Esophagus muscularis mucosa (tissue), 4 donors: ENCODE measurements at regions of chr2 and their contacts with region 1.

Region 1: DNA sequence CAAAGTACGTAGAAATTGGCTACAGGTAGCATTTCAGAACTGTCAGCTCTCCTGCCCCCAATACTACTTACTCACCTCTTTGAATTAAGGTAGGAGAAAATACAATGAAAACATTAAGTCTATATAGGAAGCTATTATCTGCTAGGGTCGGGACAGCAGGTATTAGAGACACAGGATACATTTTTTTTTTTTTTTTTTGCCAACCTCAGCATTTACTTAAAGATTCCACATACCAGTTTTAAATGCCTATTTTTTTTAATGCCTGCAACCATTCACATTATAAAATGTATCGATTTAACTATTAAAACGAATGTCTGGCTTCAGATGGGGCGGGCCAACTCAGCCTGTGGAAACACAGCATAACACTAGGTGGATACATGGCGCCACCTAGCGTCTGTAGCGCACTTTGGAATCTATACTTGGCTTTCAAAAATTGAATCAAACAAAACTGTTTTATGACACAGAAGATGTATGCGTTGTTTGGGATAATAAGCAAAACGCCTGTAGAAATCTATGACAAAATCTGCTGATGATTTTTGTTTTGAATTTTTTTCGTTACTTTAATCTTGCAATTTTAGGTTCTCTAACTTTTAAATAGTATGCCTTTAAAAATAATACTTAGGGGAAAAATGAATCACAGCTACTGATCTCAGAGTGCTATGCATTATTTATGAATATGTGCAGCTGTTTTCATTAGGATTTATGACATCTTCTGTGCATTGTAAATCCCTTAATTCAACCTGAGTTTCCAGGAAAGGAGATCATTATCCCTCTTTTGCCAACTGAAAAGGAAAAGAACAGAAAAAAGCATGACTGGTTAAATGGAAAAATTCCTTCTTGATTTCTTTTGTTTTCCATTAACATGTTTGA is 261.0 kb downstream of the NYAP2 start:
- DNase-seq: no peak
- H3K4me3 ChIP-seq: no peak overlapping the region
- H3K27ac ChIP-seq: no peak overlapping the region
- H3K4me1 ChIP-seq: no peaks in the 10 kb centered on the region
- H3K27me3 ChIP-seq: no peaks in the 10 kb centered on the region
- CTCF ChIP-seq: peak; percentile 73 to 89 (median 73)
- EP300 ChIP-seq: no peak
- POLR2A ChIP-seq: no peak

Region 2: GRCh38 chr2:225122583-225123486 is 537.7 kb before region 1 on chr2:
- intact Hi-C with region 1: loop called (anchors 5 kb)
- DNase-seq: no peak
- H3K4me3 ChIP-seq: no peak overlapping the region
- H3K27ac ChIP-seq: no peak overlapping the region
- H3K4me1 ChIP-seq: peaks cover 0 to 7% (median 0%) of the 10 kb centered on the region in 4 donors
- H3K27me3 ChIP-seq: no peaks in the 10 kb centered on the region
- CTCF ChIP-seq: peak; percentile 18 to 57 (median 39)
- EP300 ChIP-seq: no peak
- POLR2A ChIP-seq: no peak

Region 3: DNA sequence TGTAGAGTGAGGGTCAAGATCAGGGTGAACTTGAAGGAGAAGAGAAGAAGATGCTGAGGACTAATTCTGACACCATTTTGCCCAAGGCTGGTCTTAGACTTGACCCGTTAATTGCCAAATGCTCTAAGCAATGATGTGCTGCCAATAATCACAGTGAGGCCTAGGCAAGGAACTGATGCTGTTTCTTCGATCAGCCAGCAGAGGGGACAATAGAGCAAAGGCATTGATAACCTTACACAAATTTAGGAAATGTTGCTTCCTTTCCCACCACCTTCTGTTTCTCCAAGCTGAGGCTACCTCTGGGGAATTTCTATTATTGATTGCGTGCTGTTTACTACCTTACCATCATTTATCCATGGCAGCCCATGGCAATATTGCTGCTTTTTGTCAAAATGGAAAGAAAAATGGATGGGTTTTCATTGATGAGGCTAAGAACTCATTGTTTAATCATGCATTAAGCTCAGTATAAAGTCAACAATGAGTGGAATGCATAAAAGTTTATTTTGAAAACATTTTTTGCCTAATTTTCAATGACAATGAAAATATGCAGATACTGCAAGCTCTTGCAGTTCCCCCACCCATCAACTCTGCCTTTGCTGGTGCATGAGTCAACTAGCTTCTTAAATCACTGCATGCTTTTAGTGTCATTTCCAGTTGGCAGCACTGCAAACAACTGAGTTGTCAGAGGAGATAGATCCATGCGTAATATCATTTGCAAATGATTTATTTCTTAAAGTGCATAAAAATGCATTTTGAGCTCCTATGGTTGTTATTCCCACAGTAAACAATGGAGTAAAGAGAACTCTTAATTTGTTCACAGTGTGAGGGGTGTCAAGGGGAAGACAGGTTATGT is 377.4 kb before region 1 on chr2:
- intact Hi-C with region 1: loop called (anchors 2 kb)
- DNase-seq: no peak
- H3K4me3 ChIP-seq: no peak overlapping the region
- H3K27ac ChIP-seq: no peak overlapping the region
- H3K4me1 ChIP-seq: no peaks in the 10 kb centered on the region
- H3K27me3 ChIP-seq: no peaks in the 10 kb centered on the region
- CTCF ChIP-seq: peak in 1 of 3 experiments; percentile 42
- EP300 ChIP-seq: no peak
- POLR2A ChIP-seq: no peak

Region 4: GRCh38 chr2:225526760-225527390 is 133.6 kb before region 1 on chr2:
- intact Hi-C with region 1: no loop called
- DNase-seq: no peak
- H3K4me3 ChIP-seq: no peak overlapping the region
- H3K27ac ChIP-seq: no peak overlapping the region
- H3K4me1 ChIP-seq: no peaks in the 10 kb centered on the region
- H3K27me3 ChIP-seq: no peaks in the 10 kb centered on the region
- CTCF ChIP-seq: no peak
- EP300 ChIP-seq: no peak
- POLR2A ChIP-seq: no peak

Region 5: GRCh38 chr2:225889446-225889850 is 229.0 kb after region 1 on chr2:
- intact Hi-C with region 1: loop called (anchors 10 kb)
- DNase-seq: no peak
- H3K4me3 ChIP-seq: no peak overlapping the region
- H3K27ac ChIP-seq: no peak overlapping the region
- H3K4me1 ChIP-seq: peaks cover 0 to 13% (median 8%) of the 10 kb centered on the region in 4 donors
- H3K27me3 ChIP-seq: no peaks in the 10 kb centered on the region
- CTCF ChIP-seq: peak; percentile 77 to 79 (median 77)
- EP300 ChIP-seq: no peak
- POLR2A ChIP-seq: no peak